MCF 10A (cell line): ENCODE measurements at regions of chr7 and their contacts with region 1.

Region 1: GRCh38 chr7:117134889-117135552 is 181.7 kb downstream of the ST7 start:
- DNase-seq: no peak
- H3K4me3 Mint-ChIP-seq: no peak overlapping the region
- H3K27ac Mint-ChIP-seq: no peak overlapping the region
- H3K4me1 Mint-ChIP-seq: peaks cover 20% of the 10 kb centered on the region
- H3K27me3 Mint-ChIP-seq: no peaks in the 10 kb centered on the region
- CTCF ChIP-seq: no peak

Region 2: DNA sequence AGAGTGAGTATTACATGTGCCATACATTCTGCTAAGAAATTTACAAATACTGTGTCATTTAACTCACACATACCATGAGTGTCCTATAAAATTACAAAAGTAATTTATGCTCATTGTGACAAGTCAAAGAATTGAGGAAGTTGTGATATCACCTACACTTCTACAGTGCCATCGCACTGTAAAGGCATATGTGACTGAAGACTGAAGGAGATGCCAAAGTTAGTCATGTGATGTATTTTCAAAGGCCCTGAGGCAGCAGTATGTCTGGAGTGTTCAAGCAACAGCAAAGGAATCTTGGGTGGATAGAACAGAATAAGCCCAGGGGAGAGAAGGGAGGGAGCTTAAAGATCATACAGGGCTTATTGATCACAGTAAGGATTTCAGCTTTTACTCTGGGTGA is 11.0 kb after region 1 on chr7:
- CTCF ChIA-PET with region 1: interaction called, 12 read pairs
- POLR2A ChIA-PET with region 1: interaction called, 9 read pairs
- intact Hi-C with region 1: no loop called
- DNase-seq: no peak
- H3K4me3 Mint-ChIP-seq: no peak overlapping the region
- H3K27ac Mint-ChIP-seq: no peak overlapping the region
- H3K4me1 Mint-ChIP-seq: no peaks in the 10 kb centered on the region
- H3K27me3 Mint-ChIP-seq: no peaks in the 10 kb centered on the region
- CTCF ChIP-seq: no peak